GM12878 (cell line): ENCODE measurements at regions of chr3 and their contacts with region 1.

Region 1: DNA sequence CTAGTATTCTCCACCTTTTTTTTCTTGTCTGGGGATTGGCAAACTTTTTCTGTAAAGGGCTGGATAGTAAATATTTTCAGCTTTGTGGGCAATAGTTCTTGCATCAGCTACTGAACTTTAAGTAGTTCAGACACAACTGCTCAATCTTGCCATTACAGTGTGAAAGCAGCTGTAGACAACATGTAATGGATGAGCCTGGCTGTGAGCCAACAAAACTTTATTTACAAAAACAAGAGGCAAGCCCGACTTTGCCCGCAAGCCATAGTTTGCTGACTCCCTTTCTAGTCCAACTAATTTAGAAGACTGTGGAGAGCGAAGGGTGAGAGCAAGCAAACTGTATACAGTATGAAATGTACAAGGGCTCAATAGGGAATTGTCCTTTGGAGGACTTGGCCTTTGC is 6.2 kb downstream of the FRMD4B start:
- DNase-seq: no peak
- ATAC-seq: no peak
- H3K4me3 ChIP-seq: no peak overlapping the region
- H3K27ac ChIP-seq: no peak overlapping the region
- H3K4me1 ChIP-seq: no peaks in the 10 kb centered on the region
- H3K27me3 ChIP-seq: no peaks in the 10 kb centered on the region; a peak in 1 of 4 replicates
- CTCF ChIP-seq: no peak
- EP300 ChIP-seq: no peak
- POLR2A ChIP-seq: no peak
- RAD21 ChIP-seq: no peak

Region 2: GRCh38 chr3:69181592-69182211 is 198.0 kb before region 1 on chr3:
- CTCF ChIA-PET with region 1: no interaction called
- POLR2A ChIA-PET with region 1: interaction called, 11 read pairs
- RAD21 ChIA-PET with region 1: no interaction called
- SMC1A ChIA-PET with region 1: no interaction called
- in situ Hi-C with region 1: no loop called
- intact Hi-C with region 1: no loop called
- DNase-seq: no peak
- ATAC-seq: no peak
- H3K4me3 ChIP-seq: no peak overlapping the region
- H3K27ac ChIP-seq: no peak overlapping the region
- H3K4me1 ChIP-seq: no peaks in the 10 kb centered on the region
- H3K27me3 ChIP-seq: no peaks in the 10 kb centered on the region
- CTCF ChIP-seq: no peak
- EP300 ChIP-seq: no peak
- POLR2A ChIP-seq: no peak
- RAD21 ChIP-seq: no peak

Region 3: DNA sequence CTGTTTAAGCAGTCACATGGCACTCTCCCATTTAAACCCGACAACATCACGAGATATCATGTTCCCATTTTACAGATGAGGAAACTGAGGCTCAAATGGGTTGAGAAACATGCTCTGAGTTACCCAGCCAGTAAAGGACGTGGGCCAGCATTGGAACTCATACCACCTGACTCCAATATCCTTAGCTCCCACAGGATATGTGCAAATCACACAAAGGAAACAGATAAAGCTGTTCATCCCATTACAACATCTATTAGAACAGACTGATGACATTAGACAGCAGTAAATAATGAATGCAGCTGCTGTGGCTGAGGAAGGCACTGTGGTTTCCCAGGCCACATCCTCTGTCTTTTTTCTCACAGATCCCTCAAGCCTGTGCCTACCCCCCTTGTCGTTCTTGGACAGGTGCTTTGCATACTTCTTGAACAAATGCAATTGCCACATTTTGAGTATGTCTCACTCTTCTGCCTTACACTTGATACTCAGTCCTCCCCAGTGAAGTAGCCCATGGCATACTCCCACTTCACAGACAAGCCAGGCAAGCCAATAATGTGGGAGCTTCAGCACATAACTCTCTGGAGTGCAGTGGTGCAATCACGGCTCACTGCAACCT is 11.4 kb before region 1 on chr3:
- CTCF ChIA-PET with region 1: interaction called, 10 read pairs
- POLR2A ChIA-PET with region 1: interaction called, 3 read pairs
- RAD21 ChIA-PET with region 1: interaction called, 3 read pairs
- SMC1A ChIA-PET with region 1: interaction called, 5 read pairs
- in situ Hi-C with region 1: no loop called
- intact Hi-C with region 1: no loop called
- DNase-seq: peak; percentile 91
- ATAC-seq: peak; percentile 98
- H3K4me3 ChIP-seq: no peak overlapping the region
- H3K27ac ChIP-seq: no peak overlapping the region
- H3K4me1 ChIP-seq: peaks cover 23% of the 10 kb centered on the region
- H3K27me3 ChIP-seq: no peaks in the 10 kb centered on the region
- CTCF ChIP-seq: no peak
- EP300 ChIP-seq: peak; percentile 79 to 84; a peak in 2 of 4 replicates
- POLR2A ChIP-seq: no peak
- RAD21 ChIP-seq: no peak

Region 4: DNA sequence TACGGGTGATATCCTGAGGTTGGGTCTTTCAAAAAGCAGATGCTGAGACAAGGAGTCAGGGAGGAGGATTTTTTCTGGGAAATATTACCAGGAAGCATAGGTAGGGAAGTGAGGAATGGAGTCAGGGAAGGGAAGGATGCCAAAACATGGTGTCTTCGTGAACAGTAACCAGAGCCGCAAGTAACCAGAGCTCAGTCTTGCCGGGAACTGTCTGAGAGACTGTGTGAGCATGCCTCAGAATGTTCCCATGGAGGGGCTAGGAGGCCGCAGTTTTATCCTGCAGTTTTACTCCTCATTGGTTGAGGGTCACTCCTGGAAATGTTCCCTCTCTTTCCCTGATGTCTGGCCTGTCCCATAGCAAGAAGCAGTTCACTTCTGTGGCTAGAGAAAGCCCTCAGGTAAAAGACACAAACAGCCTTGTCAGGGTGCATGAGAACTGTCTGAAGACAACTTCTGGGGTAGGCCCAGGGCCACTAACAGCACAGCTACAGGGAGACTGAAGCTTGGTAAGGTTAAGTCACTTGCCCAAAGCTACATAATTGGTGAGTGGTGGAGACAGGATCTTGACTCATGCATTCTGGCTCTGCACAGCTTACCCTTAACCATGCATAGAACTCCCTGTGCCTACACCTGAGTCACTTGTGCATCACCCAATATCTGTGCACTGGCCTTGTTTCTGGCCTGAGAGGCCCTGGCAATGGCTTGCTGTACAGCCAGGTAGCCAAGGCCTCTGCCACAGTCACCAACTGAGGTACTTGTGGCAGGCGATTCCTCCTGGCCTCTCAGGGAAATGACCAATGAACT is 82.6 kb after region 1 on chr3:
- CTCF ChIA-PET with region 1: no interaction called
- POLR2A ChIA-PET with region 1: no interaction called
- RAD21 ChIA-PET with region 1: no interaction called
- SMC1A ChIA-PET with region 1: no interaction called
- in situ Hi-C with region 1: no loop called
- intact Hi-C with region 1: no loop called
- DNase-seq: no peak
- ATAC-seq: no peak
- H3K4me3 ChIP-seq: no peak overlapping the region
- H3K27ac ChIP-seq: no peak overlapping the region
- H3K4me1 ChIP-seq: no peaks in the 10 kb centered on the region
- H3K27me3 ChIP-seq: no peaks in the 10 kb centered on the region
- CTCF ChIP-seq: no peak
- EP300 ChIP-seq: no peak
- POLR2A ChIP-seq: no peak
- RAD21 ChIP-seq: no peak

Region 5: DNA sequence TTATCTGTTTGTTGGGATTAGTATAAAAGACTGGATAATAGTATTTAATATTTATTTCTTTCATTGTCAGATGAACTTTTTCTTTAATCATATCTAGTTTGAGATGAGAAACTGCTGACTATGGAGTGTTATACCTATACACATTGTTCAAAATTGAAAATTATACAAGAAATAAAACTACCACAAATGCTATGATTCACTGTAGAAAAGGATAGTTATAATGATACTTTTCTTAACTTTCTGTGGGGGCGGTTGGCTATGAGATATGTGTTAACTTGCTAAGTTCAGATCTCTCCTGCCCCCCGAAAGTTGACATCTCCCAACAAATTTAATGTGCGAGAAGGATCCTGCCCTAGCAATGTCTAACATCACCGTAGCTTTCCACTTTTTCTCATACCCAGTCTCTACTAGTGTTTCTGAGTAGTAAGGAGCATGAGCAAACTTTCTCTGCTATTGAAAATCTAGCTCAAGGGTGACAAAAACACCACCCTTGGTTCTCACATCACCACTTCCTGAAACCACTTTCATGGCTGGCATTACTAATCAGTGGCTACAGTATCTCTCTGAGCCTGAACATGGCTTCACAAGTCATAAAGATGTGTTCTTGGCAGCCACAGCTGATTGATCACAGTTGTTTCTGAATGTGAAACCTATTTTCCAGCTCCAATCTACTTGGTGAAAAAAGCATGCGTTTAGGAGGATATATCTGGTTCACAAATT is 604.0 kb after region 1 on chr3:
- CTCF ChIA-PET with region 1: no interaction called
- POLR2A ChIA-PET with region 1: no interaction called
- RAD21 ChIA-PET with region 1: no interaction called
- SMC1A ChIA-PET with region 1: no interaction called
- in situ Hi-C with region 1: no loop called
- intact Hi-C with region 1: no loop called
- DNase-seq: no peak
- ATAC-seq: peak; percentile 88
- H3K4me3 ChIP-seq: no peak overlapping the region
- H3K27ac ChIP-seq: no peak overlapping the region
- H3K4me1 ChIP-seq: no peaks in the 10 kb centered on the region
- H3K27me3 ChIP-seq: no peaks in the 10 kb centered on the region
- CTCF ChIP-seq: no peak
- EP300 ChIP-seq: no peak
- POLR2A ChIP-seq: no peak
- RAD21 ChIP-seq: no peak